ENCODE measurements at regions of chr2 and their contacts with region 1.

Region 1: DNA sequence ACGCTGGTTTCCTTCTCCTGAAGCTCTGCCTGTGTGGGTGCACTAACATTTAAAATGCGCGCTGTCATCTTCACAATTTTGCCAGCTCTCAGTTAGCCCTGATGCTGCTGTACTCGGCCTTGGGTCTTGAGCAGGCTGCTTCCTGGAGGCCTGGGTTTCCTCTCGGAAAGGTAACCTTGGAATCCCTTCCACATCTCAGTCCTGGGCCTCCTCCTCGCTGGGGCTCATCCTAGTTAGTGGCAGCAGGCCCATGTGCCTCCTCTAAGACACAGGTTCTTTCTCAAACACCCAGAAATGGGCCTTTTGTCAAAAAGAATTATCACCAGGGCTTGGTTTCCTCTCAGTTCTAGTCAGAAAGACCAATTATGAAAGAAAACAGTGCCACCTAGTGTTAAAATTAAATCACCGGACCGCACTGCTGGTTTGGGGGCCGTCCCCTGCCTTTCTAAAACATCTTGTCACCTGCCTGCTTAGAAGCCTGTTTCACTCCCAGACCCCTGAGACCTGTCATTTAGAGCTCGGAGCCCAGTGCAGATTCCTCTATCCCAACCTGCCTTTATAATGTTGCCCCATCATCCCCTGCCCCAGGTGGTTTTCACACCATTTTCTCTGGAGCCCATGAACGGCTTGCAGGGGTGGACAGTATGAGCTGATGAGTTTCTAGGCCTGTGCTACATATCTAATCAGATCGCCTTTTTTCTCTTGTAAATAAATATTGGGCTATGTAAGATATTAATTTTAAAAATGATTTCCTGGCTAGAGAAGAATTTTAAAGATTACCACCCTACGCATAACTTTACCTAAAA is 42.4 kb downstream of the HK2 start:
- DNase-seq: no peak
- H3K4me3 ChIP-seq: no peak overlapping the region
- H3K27ac ChIP-seq: peak overlapping the region in 1 of 2 donors; percentile 24
- H3K4me1 ChIP-seq: no peaks in the 10 kb centered on the region
- H3K27me3 ChIP-seq: no peaks in the 10 kb centered on the region
- CTCF ChIP-seq: peak; percentile 54 to 79 (median 59)

Region 2: DNA sequence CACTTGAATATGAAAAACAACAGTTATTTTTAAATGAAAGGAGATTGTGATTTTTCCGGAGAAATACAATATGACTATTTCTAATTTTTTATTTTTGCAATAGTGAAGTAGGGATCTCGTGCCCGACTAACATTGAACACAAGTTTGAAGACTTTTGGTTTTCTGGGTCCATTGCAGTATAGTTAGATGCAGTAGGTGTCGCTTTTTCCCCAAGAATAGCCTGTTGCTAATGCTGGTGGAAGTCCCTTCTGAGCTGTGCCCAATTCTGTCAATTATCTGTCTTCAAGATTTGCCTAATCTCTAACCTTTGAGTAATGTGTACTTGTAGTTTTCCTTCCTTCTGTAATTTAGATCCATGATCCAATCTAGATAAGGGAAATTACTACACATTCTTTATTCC is 185.7 kb before region 1 on chr2:
- intact Hi-C with region 1: loop called (anchors 1 kb)
- DNase-seq: no peak
- H3K4me3 ChIP-seq: no peak overlapping the region
- H3K27ac ChIP-seq: no peak overlapping the region
- H3K4me1 ChIP-seq: no peaks in the 10 kb centered on the region
- H3K27me3 ChIP-seq: no peaks in the 10 kb centered on the region
- CTCF ChIP-seq: peak; percentile 33 to 69 (median 36)